ENCODE measurements at regions of chr11 and their contacts with region 1.

Region 1: GRCh38 chr11:17230867-17231851 is 23.4 kb upstream of the PIK3C2A start:
- DNase-seq: no peak
- CTCF ChIP-seq: no peak

Region 2: GRCh38 chr11:17354601-17354991 is 123.4 kb after region 1 on chr11:
- in situ Hi-C with region 1: loop called (anchors 25 kb)
- DNase-seq: peak; percentile 70
- CTCF ChIP-seq: peak; percentile 50

Region 3: DNA sequence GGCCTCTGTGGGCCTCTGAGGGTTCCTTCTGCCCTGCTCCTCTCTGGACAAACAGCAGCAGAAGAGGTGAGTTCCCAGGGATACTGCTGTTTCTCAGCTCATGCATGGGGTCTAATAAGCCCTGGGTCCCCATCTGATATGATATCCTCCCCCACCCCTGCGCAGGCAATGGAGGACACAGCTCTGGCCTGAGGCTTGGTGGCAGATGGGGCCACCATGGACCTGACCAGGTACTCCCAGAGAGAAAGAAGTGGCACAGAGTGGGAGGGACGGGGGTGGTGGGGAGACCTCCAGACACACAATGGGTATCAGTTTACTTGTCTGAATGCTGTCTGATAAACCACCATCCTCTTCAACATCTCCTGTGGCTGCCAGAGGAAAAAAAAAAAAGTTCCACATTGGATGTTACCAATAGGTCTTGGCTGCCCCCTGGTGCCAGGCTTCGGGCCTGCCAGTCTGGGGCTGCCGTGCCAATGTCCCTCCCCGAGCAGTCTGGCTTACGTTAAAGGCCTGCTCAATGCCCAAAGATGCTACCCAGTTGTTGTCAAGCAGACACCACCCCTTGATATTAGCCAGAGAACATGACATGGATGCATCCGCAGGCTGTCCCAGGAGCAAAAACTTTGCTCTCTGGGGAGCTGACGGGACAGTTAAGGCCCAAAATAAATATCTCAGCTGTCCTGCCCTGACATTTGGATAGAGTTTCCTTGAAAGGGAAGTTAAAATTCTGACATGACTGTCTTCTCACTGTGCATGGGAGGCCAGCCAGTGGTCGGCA is 273.4 kb after region 1 on chr11:
- in situ Hi-C with region 1: loop called (anchors 10 kb)
- DNase-seq: peak; percentile 83
- CTCF ChIP-seq: peak; percentile 81